ENCODE measurements at regions of chr1 and their contacts with region 1.

Region 1: GRCh38 chr1:53485478-53486394 is 26.5 kb downstream of the DMRTB1 start:
- DNase-seq: peak; percentile 85
- ATAC-seq: peak; percentile 89

Region 2: GRCh38 chr1:53592521-53592982 is 106.8 kb after region 1 on chr1:
- intact Hi-C with region 1: loop called (anchors 5 kb)
- DNase-seq: no peak
- ATAC-seq: no peak

Region 3: GRCh38 chr1:53681977-53682685 is 196.4 kb after region 1 on chr1:
- intact Hi-C with region 1: loop called (anchors 1 kb)
- DNase-seq: peak; percentile 67
- ATAC-seq: peak; percentile 42

Region 4: DNA sequence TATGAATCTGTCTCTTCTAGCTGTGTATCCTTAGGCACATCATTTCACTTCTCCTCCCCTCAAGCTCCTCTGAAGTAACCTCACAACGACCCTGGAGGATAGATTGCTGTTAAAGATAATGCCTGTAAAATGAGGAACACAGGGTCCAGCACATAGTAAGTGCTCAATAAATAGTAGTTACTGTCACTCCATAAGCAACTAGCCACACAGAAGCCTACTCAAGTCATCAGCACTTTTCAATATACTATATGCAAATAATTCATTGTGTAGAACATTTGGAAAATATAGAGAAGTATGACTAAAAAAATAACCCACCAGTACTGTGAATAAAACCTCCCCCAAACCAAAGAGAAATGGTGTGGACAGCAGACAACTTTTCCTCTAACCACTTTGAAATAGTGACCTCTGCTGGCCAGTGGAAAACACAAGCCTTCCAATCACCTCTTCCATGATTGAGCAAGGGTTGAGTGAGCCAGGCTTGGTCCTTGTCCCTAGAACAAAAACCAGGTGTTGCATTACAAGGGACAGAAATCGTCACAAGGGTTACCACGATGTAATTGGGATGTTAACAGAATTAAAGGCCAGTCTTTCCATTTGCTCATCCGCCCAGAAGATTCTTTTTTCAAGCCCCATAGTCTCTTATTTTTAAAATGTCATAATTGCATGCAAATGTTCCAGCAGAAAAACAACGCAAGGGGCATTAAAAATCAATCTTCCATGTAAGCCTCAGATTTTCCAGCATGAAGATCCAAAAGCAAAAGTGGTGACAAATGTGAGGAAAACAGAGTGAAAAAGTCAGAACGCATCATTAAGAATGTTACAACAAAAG is 269.0 kb after region 1 on chr1:
- intact Hi-C with region 1: loop called (anchors 2 kb)
- DNase-seq: no peak
- ATAC-seq: no peak

Measured in Right ventricle myocardium inferior (tissue), 1 donor.